ENCODE measurements at regions of chr7 and their contacts with region 1.

Region 1: GRCh38 chr7:97418312-97418711 is 300.8 kb downstream of the SDHAF3 start:
- DNase-seq: no peak
- ATAC-seq: no peak
- H3K4me3 ChIP-seq: no peak overlapping the region
- H3K27ac ChIP-seq: no peak overlapping the region
- H3K4me1 ChIP-seq: no peaks in the 10 kb centered on the region
- H3K27me3 ChIP-seq: no peaks in the 10 kb centered on the region
- CTCF ChIP-seq: no peak
- POLR2A ChIP-seq: no peak

Region 2: DNA sequence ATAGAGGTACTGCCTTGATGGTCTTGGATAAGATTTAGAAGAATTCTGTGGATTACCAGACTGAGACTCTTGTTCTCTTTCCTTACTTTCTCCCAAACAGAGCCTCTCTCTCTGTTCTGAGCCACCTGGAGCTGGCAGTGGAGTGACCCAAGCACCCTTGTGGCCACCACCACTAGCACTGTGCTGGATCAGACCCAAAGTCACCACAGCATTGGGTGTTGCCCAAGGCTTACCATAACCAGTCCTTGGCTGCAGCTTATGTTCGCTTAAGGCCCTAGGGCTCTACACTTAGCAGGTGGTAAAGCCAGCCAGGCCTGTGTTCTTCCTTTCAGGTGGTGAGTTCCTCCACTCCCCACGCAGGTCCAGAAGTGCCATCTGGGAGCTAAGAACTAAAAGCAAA is 788.4 kb before region 1 on chr7:
- intact Hi-C with region 1: no loop called
- DNase-seq: no peak
- ATAC-seq: no peak
- H3K4me3 ChIP-seq: no peak overlapping the region
- H3K27ac ChIP-seq: no peak overlapping the region
- H3K4me1 ChIP-seq: no peaks in the 10 kb centered on the region
- H3K27me3 ChIP-seq: no peaks in the 10 kb centered on the region
- CTCF ChIP-seq: no peak
- POLR2A ChIP-seq: no peak

Region 3: DNA sequence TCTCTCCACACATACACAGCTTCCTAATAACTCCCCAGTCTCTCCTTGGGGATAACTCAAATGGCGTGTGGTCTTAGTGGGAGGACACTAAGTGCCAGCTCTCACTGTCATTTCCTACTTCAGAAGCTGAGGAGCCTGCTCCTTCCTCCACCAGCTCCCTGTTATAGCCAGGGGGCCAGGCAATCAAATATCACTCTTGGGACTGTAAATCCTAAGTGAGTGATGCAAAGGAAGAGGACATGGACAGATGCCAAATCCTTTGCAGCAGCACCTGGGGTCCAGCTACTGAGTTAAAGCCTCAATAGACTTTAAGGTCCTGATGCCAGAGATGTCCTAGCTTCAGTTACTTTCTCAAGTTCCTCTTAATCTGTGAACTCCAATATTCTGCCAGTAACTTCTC is 742.8 kb before region 1 on chr7:
- intact Hi-C with region 1: no loop called
- DNase-seq: no peak
- ATAC-seq: no peak
- H3K4me3 ChIP-seq: no peak overlapping the region
- H3K27ac ChIP-seq: no peak overlapping the region
- H3K4me1 ChIP-seq: no peaks in the 10 kb centered on the region
- H3K27me3 ChIP-seq: no peaks in the 10 kb centered on the region
- CTCF ChIP-seq: no peak
- POLR2A ChIP-seq: no peak

Region 4: DNA sequence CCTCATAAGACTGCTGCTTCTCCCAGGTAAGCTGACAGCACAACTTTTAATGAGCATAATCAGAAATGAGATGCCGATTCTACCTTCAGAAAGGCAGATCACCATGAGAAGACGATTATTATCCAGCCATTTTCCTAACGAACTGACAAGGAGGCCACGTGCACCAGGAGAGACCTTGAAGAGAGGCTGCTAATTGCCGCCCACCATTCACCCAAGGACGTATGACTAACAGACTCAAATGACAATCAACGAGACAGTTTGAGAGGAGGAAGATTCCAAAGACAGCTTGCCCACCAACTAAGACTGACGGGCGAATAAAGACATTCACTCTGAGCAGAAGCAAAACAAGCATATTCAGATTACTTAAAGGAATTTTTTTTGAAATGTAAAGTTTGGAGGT is 11.7 kb after region 1 on chr7:
- intact Hi-C with region 1: loop called in 1 of 10 experiments (anchors 1 kb)
- DNase-seq: no peak
- ATAC-seq: no peak
- H3K4me3 ChIP-seq: no peak overlapping the region
- H3K27ac ChIP-seq: no peak overlapping the region
- H3K4me1 ChIP-seq: no peaks in the 10 kb centered on the region
- H3K27me3 ChIP-seq: no peaks in the 10 kb centered on the region
- CTCF ChIP-seq: no peak
- POLR2A ChIP-seq: no peak

Region 5: GRCh38 chr7:97479740-97480290 is 61.5 kb after region 1 on chr7:
- intact Hi-C with region 1: loop called in 1 of 10 experiments (anchors 10 kb)
- DNase-seq: no peak
- ATAC-seq: no peak
- H3K4me3 ChIP-seq: no peak overlapping the region
- H3K27ac ChIP-seq: no peak overlapping the region
- H3K4me1 ChIP-seq: no peaks in the 10 kb centered on the region
- H3K27me3 ChIP-seq: no peaks in the 10 kb centered on the region
- CTCF ChIP-seq: no peak
- POLR2A ChIP-seq: no peak

Measured in heart left ventricle (tissue), 16 donors.